Vagina (tissue), 2 donors: ENCODE measurements at regions of chr20 and their contacts with region 1.

Region 1: GRCh38 chr20:17654649-17655285 is 27.3 kb downstream of the RRBP1 start:
- DNase-seq: no peak
- H3K4me3 ChIP-seq: no peak overlapping the region
- H3K27ac ChIP-seq: no peak overlapping the region
- H3K4me1 ChIP-seq: peaks cover 35% of the 10 kb centered on the region
- H3K27me3 ChIP-seq: no peaks in the 10 kb centered on the region
- CTCF ChIP-seq: peak in 1 of 3 experiments; percentile 17
- POLR2A ChIP-seq: no peak

Region 2: GRCh38 chr20:18213002-18213401 is 558.2 kb after region 1 on chr20:
- intact Hi-C with region 1: loop called (anchors 5 kb)
- DNase-seq: no peak
- H3K4me3 ChIP-seq: no peak overlapping the region
- H3K27ac ChIP-seq: no peak overlapping the region
- H3K4me1 ChIP-seq: no peaks in the 10 kb centered on the region
- H3K27me3 ChIP-seq: no peaks in the 10 kb centered on the region
- CTCF ChIP-seq: no peak
- POLR2A ChIP-seq: no peak